AG04450 (cell line): ENCODE measurements at regions of chr6 and their contacts with region 1.

Region 1: DNA sequence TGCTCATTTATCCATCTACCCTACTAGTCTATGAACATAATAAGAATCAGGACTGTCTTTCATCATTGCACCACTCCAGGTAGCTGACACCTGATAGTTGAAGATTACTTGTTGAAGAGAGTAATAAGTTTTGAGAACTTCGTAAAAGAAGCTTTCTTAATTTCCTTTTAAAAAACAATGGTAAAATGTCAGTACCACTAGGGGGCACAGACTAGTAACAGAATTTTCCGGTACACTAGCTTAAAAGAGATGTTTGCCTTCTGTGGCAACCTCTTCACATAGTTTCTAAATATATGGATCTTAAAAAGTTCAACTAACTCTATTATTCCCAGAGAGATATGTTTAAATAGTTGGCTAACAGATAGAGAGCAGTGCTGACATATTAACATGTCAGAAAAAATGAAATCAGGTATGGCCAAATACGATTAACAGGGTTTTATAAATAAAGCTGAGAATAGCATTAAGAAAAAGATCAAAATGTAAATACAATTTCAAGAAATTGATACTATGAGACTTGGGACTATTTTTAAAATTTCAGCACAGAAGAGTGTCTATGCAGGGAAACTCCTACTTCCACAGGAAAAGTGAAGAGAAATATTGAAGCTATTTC is 5.4 kb upstream of the KCNQ5 start:
- DNase-seq: no peak
- H3K4me3 ChIP-seq: no peak overlapping the region
- H3K27ac ChIP-seq: no peak overlapping the region
- H3K27me3 ChIP-seq: no peaks in the 10 kb centered on the region
- CTCF ChIP-seq: peak; percentile 71

Region 2: GRCh38 chr6:72580281-72580940 is 36.1 kb before region 1 on chr6:
- CTCF ChIA-PET with region 1: interaction called, 13 read pairs
- POLR2A ChIA-PET with region 1: no interaction called
- DNase-seq: peak; percentile 49
- H3K4me3 ChIP-seq: no peak overlapping the region
- H3K27ac ChIP-seq: no peak overlapping the region
- H3K27me3 ChIP-seq: no peaks in the 10 kb centered on the region
- CTCF ChIP-seq: peak; percentile 84

Region 3: GRCh38 chr6:72627539-72627938 is 11.0 kb after region 1 on chr6:
- CTCF ChIA-PET with region 1: interaction called, 13 read pairs
- POLR2A ChIA-PET with region 1: no interaction called
- DNase-seq: no peak
- H3K4me3 ChIP-seq: no peak overlapping the region
- H3K27ac ChIP-seq: no peak overlapping the region
- H3K27me3 ChIP-seq: no peaks in the 10 kb centered on the region
- CTCF ChIP-seq: no peak

Region 4: DNA sequence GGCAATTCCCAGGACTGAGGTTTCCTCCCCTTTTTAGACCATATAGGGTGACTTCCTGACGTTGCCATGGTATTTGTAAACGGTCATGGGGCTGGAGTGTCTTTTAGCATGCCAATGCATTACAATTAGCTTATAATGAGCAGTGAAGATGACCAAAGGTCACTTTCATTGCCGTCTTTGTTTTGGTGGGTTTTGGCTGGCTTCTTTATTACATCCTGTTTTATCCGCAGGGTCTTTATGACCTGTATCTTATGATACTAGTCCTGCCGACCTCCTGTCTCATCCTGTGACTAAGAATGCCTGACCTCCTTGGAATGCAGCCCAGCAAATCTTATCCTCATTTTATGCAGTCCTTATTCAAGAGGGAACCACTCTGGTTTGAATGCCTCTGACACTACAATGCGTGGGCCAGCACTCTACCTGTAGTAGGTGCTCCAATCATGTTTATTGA is 195.5 kb after region 1 on chr6:
- CTCF ChIA-PET with region 1: no interaction called
- POLR2A ChIA-PET with region 1: no interaction called
- DNase-seq: no peak
- H3K4me3 ChIP-seq: no peak overlapping the region
- H3K27ac ChIP-seq: no peak overlapping the region
- H3K27me3 ChIP-seq: no peaks in the 10 kb centered on the region
- CTCF ChIP-seq: no peak

Region 5: DNA sequence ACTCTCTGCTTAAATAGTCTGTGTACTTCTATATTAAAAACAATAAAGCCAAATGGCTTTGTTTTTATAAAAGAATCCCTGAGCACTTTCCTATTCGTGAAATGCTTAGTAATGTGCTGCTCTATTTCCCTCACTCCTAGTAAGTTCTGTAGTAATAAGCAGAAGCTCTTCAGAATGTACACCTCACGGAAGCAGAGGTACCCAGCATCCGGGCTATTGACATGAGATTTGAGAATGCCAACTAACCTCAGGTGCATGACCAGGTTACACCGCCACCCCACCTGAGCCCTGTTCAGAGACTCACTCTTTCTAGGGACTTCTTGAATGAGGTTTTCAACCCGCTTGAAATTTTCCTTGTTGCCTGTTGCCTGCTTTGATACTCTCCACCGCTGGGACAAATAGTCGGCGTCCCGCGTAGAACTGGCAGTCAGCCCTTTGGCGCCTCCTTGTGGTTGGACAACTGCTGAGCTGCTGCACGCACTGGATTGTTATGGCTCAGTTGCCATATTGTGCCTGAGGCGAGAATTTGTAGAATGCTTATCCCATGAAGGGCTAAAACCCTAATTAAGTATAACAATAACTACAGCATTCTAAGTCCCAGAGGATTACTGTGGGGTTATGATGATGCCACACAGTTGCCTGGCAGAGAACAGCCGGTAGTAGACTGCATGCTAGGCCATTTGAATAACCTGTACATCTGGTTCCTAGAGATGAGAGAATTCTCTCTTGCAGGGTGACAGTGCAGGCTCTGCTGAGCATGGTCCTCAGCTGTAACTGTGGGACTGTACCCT is 513.3 kb after region 1 on chr6:
- CTCF ChIA-PET with region 1: interaction called, 262 read pairs
- POLR2A ChIA-PET with region 1: no interaction called
- DNase-seq: peak; percentile 37
- H3K4me3 ChIP-seq: no peak overlapping the region
- H3K27ac ChIP-seq: no peak overlapping the region
- H3K27me3 ChIP-seq: no peaks in the 10 kb centered on the region
- CTCF ChIP-seq: peak; percentile 100

Region 6: GRCh38 chr6:73329201-73329600 is 712.7 kb after region 1 on chr6:
- CTCF ChIA-PET with region 1: interaction called, 23 read pairs
- POLR2A ChIA-PET with region 1: no interaction called
- DNase-seq: no peak
- H3K4me3 ChIP-seq: no peak overlapping the region
- H3K27ac ChIP-seq: no peak overlapping the region
- H3K27me3 ChIP-seq: no peaks in the 10 kb centered on the region
- CTCF ChIP-seq: no peak